Astrocyte of the cerebellum (primary cell): ENCODE measurements at regions of chr11 and their contacts with region 1.

Region 1: DNA sequence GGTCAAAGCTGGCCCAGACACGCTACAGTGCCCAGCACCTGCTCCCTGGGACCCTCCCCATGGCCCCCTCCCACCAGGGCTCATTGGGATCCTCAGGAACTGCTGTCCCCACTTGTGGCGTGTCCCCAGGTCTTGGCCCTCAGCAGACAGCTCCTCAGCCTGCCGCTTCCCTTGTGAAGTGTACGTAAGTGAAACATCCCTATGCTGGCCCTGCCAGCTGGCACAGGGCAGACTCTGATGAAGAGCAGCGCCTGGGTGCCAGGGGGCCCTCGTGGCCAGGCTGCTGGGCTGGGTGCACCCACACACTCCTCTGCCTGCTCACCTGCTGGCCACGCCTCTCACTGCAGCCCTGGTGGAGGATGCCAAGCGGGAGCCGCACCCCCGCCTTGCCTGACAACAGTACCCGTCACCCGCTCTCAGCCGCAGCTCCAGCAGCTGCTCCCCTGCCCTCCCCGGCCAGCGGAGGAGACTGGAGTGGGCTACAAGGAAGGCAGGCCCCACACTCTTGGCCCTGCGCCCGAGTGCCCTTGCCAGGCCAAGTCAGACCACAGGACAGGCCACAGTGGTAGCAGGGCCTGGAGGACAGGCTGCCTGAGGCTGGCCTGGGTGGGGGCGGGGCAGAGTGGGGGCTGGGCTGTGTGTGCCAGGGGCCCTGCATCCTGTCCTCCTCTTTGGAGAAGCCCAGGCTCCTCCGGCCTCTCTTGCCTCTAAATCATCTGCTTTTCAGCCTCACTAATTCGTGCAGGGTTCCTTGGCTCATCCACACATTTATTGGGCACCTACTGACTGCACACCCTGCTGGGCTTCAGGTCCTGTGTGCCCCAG is 39.5 kb downstream of the IGF2 start:
- DNase-seq: no peak
- H3K4me3 ChIP-seq: no peak overlapping the region
- CTCF ChIP-seq: no peak

Region 2: DNA sequence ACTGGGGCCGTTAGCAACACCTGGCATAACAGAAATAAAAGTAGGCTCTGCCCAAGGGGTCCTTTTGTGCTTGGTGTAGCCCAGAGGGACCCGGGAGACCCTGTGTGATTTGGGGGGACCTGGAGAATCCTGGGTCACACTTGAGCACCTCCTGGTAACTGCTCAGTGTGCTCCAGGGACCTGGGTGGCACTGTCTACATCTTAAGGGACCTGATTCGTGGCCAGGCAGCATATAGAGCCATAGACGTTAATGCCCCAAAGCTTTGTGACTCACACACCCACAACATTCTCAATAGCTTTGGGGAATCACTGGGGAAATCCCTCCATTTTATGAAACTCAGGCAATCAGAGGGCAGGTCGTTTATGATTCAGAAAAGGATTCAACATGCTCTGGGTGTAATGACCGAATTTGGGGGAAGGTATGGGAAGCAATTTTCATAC is 43.1 kb after region 1 on chr11:
- in situ Hi-C with region 1: loop called (anchors 5 kb)
- DNase-seq: no peak
- H3K4me3 ChIP-seq: no peak overlapping the region
- CTCF ChIP-seq: no peak